ENCODE measurements at regions of chr11 and their contacts with region 1.

Region 1: GRCh38 chr11:17384002-17384511 is 4.4 kb downstream of the KCNJ11 start:
- DNase-seq: peak; percentile 26
- H3K4me3 ChIP-seq: no peak overlapping the region
- CTCF ChIP-seq: peak; percentile 87

Region 2: GRCh38 chr11:17221968-17222367 is 162.1 kb before region 1 on chr11:
- CTCF ChIA-PET with region 1: interaction called, 11 read pairs
- POLR2A ChIA-PET with region 1: no interaction called
- DNase-seq: no peak
- H3K4me3 ChIP-seq: no peak overlapping the region
- CTCF ChIP-seq: no peak

Region 3: DNA sequence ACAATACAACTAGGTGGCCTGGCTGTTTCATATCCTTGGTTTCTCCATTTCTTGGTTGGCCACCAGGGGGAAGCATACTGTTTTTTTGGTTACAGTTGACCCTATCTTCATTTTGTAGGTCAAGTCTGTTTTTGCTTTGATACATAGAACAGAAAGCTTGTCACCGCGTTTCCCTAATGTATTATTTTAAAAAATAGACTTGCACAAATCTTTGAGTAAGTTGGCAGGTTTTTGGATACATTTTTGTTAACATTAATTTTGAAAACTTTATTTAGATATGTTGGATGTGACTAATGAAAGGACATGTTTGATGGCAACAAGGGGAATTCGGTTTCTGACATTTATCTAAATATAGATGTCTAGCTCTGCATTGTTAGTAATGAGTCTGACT is 29.5 kb before region 1 on chr11:
- CTCF ChIA-PET with region 1: interaction called, 48 read pairs
- POLR2A ChIA-PET with region 1: no interaction called
- DNase-seq: no peak
- H3K4me3 ChIP-seq: no peak overlapping the region
- CTCF ChIP-seq: peak; percentile 59

Region 4: GRCh38 chr11:17371614-17372013 is 12.4 kb before region 1 on chr11:
- CTCF ChIA-PET with region 1: interaction called, 62 read pairs
- POLR2A ChIA-PET with region 1: interaction called, 3 read pairs
- DNase-seq: no peak
- H3K4me3 ChIP-seq: no peak overlapping the region
- CTCF ChIP-seq: no peak

Region 5: DNA sequence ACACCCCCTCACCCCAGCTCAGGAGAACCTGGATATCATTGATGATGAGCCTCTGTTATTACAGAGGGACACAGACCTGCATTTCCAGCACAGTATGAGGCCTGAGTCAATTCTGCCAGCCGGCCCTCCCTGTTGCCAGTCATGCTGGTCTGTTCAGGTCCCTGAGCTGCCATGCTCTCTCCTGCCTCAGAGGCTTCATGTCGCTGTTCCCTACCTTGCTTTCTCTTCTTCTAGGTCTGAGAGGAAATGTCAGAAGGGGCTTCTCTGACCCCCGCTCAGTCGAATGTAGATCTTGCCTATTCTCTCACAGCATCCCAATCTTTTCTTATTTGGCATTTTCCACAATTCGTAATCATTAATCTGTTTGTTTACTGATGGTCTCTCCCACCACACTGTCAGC is 114.4 kb after region 1 on chr11:
- CTCF ChIA-PET with region 1: interaction called, 116 read pairs
- POLR2A ChIA-PET with region 1: no interaction called
- DNase-seq: no peak
- H3K4me3 ChIP-seq: no peak overlapping the region
- CTCF ChIP-seq: peak; percentile 25

Region 6: DNA sequence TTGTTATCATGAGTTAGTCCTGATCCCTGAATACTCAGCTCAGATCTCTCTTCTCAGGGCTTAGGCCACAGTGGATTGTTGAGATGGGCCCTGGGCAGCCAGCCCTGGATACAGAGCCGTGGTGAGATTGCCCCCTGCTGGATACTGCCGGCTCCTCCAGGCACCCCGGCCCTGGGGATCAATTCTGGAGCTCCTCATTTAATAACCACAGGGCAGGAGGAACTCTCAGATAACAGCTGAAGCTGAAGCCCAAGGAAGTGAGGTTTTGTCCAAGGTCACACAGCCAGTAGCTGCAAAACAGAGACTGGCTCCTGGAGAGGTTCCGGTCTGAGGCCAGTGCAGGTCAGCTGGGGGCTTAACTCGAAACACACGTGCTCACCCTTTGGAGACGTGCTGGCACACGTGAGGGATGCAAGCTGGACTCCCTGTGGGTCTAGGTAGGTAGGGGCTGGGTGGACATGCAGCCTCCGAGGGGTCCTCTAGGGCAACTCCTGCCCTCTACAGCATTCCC is 144.2 kb after region 1 on chr11:
- CTCF ChIA-PET with region 1: interaction called, 65 read pairs
- POLR2A ChIA-PET with region 1: no interaction called
- DNase-seq: no peak
- H3K4me3 ChIP-seq: no peak overlapping the region
- CTCF ChIP-seq: peak; percentile 75

Measured in AG04449 (cell line).